Dorsolateral prefrontal cortex (tissue), 120 donors: ENCODE measurements at regions of chr17 and their contacts with region 1.

Region 1: GRCh38 chr17:27760069-27760885 is 40.1 kb downstream of the NOS2 start:
- DNase-seq: peak in 8 of 10 donors; percentile 57 to 79 (median 72)
- H3K4me3 ChIP-seq: no peak overlapping the region
- H3K27ac ChIP-seq: no peak overlapping the region
- H3K27me3 ChIP-seq: no peaks in the 10 kb centered on the region
- CTCF ChIP-seq: peak; percentile 64 to 97 (median 92)

Region 2: DNA sequence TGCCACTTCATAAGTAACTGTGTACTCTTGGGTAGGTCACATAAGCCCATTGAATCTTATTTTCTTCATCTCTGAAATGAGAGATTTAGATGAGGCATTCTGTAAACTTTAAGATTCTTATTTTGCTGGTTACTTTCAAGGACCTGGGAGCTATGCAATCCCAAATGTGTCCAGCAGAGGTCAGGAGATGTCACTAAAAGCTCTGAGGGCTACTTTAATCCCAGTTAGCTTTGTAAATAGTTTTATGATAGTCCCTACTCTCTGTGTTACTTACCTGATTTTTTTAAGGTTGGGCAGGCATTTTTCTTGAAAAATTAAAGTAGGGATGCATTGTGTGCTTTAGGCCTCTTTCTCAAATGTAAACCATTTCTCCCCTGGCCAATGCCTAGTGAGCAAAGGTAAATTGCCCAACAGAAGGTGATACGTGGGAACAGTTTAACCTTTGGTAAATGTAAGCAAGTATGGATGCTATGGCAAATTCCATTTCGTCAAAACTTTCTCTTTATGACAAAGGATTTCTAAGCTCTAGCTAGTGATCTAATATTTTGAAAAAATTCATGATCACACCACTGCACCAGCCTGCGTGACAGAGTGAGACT is 523.5 kb before region 1 on chr17:
- intact Hi-C with region 1: loop called (anchors 5 to 10 kb)
- DNase-seq: peak in 8 of 10 donors; percentile 34 to 88 (median 68)
- H3K4me3 ChIP-seq: no peak overlapping the region
- H3K27ac ChIP-seq: no peak overlapping the region
- H3K27me3 ChIP-seq: no peaks in the 10 kb centered on the region
- CTCF ChIP-seq: peak; percentile 84 to 99 (median 95)

Region 3: DNA sequence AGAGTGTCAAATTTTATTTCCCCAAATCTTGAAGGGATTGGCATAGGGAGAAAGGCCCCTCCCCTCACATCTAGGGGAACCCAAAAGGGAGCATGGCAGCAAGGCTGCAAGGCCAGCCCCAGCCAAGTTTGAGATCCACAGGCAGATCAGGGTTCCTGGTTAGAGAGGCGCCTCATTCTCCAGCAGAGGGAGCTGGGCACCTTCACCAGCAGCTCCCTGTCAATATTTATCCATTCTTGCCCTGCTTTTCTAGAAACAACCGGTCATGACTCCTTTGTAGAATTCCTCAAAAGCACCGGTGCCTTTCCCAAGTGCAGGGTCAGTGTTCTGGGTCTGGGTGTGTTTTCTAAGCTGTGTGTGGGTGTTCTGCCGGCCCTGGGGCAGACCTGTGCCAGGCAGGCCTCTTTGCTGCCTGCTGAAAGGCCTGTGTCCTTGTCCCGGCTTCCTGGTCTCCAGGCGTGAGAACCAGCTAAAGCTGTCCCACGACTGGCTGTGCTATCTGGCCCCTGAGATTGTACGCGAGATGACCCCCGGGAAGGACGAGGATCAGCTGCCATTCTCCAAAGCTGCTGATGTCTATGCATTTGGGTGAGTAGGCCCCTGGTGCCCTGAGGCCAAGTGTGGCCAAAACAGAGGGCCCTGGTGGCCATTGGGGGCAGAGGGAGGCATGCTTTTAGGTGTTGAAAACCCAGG is 150.5 kb before region 1 on chr17:
- intact Hi-C with region 1: loop called (anchors 5 kb)
- DNase-seq: peak in 6 of 10 donors; percentile 27 to 72 (median 62)
- H3K4me3 ChIP-seq: peak overlapping the region in 30 of 59 donors; percentile 0 to 47 (median 18)
- H3K27ac ChIP-seq: peak overlapping the region in 25 of 59 donors; percentile 1 to 76 (median 40)
- H3K27me3 ChIP-seq: no peaks in the 10 kb centered on the region
- CTCF ChIP-seq: peak in 55 of 56 donors; percentile 30 to 77 (median 65)

Region 4: GRCh38 chr17:27747462-27748359 is 12.6 kb before region 1 on chr17:
- intact Hi-C with region 1: no loop called
- DNase-seq: no peak
- H3K4me3 ChIP-seq: no peak overlapping the region
- H3K27ac ChIP-seq: no peak overlapping the region
- H3K27me3 ChIP-seq: no peaks in the 10 kb centered on the region
- CTCF ChIP-seq: peak in 2 of 56 donors; percentile 9 to 11

Region 5: GRCh38 chr17:27824745-27825144 is 64.5 kb after region 1 on chr17:
- intact Hi-C with region 1: no loop called
- DNase-seq: no peak
- H3K4me3 ChIP-seq: no peak overlapping the region
- H3K27ac ChIP-seq: no peak overlapping the region
- H3K27me3 ChIP-seq: no peaks in the 10 kb centered on the region
- CTCF ChIP-seq: no peak

Region 6: GRCh38 chr17:27879987-27880608 is 119.8 kb after region 1 on chr17:
- intact Hi-C with region 1: loop called (anchors 2 kb)
- DNase-seq: peak; percentile 68 to 86 (median 80)
- H3K4me3 ChIP-seq: no peak overlapping the region
- H3K27ac ChIP-seq: peak overlapping the region in 54 of 59 donors; percentile 24 to 87 (median 70)
- H3K27me3 ChIP-seq: no peaks in the 10 kb centered on the region
- CTCF ChIP-seq: peak; percentile 40 to 97 (median 87)

Region 7: DNA sequence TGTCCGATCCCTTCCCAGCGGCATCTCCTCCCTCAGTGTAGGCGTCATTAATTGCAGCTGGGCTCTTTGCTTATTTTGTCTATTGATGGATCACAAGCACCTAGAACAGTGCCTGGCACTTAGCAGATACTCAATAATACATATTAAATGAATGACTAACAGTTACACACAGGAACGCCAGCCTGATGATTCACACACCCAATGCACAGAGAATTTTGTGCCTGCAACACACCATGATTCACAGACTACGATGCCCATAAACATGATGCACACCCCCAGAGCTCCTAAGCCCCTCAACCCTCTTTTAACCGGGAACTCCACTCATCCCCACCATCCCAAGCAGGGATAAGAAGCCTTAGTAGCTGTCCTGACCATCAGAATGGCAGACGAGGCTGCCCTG is 492.2 kb after region 1 on chr17:
- intact Hi-C with region 1: loop called in 1 of 2 experiments (anchors 10 kb)
- DNase-seq: no peak
- H3K4me3 ChIP-seq: no peak overlapping the region
- H3K27ac ChIP-seq: no peak overlapping the region
- H3K27me3 ChIP-seq: no peaks in the 10 kb centered on the region
- CTCF ChIP-seq: no peak